Activated T-helper 1 cell treated with anti-CD3 and anti-CD28 coated beads, Interleukin-12 subunit alpha, Interleukin-12 subunit beta, Interleukin-2, Interleukin-4 antibody, amounts not matched to agents 30 ng/mL and 10 ng/mL and 1 ng/mL, durations not matched to agents 14 hours and 24 hours and 36 hours (primary cell): ENCODE measurements at regions of chr1 and their contacts with region 1.

Region 1: DNA sequence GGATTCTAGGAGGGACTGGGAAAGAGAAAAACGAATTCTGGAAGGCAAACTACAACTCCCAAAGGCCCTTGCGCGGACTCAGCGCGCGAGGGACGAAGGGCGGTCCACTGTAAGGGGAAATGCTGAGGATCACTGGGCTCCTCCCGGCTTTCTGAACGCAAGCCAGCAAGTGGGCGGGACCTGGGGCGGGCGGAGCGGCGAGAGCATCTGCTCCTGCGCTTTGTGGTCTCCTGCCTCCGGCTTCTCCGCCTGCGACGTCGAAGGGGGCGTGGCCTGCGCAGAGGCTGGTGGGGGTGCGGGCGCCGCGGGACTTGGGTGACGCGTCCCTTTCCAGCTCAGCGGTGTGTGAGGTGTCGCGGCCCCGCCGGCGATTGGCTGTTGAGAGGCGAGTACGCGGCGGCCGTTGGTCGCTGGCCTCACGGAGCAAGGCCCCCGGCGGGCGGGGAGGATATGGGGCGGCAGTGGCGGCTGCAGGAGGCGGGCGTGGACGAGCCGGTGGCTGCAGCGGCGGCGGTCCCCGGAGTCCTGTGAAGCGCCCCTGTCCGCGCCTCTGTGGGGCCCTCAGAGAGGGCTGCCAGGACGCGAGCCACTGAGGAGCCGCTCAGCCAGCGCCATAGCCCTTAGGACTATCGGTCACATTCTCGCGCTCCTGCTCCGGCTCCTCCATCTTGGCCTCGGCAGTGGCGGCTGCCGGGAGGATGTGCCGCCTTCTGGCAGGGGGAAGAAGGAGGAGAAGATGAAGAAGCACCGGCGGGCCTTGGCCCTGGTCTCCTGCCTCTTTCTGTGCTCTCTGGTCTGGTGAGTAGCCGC is at the start of gene SUCO:
- DNase-seq: peak; percentile 100
- H3K4me3 Mint-ChIP-seq: peak within 1 kb of the TSS; percentile 98
- H3K27ac Mint-ChIP-seq: peak within 1 kb of the TSS; percentile 99
- H3K4me1 Mint-ChIP-seq: peaks cover 48% of the 10 kb centered on the region
- H3K27me3 Mint-ChIP-seq: peaks cover 7% of the 10 kb centered on the region
- total RNA-seq, gene SUCO: 39.3 and 40.4 TPM in 2 replicates

Region 2: DNA sequence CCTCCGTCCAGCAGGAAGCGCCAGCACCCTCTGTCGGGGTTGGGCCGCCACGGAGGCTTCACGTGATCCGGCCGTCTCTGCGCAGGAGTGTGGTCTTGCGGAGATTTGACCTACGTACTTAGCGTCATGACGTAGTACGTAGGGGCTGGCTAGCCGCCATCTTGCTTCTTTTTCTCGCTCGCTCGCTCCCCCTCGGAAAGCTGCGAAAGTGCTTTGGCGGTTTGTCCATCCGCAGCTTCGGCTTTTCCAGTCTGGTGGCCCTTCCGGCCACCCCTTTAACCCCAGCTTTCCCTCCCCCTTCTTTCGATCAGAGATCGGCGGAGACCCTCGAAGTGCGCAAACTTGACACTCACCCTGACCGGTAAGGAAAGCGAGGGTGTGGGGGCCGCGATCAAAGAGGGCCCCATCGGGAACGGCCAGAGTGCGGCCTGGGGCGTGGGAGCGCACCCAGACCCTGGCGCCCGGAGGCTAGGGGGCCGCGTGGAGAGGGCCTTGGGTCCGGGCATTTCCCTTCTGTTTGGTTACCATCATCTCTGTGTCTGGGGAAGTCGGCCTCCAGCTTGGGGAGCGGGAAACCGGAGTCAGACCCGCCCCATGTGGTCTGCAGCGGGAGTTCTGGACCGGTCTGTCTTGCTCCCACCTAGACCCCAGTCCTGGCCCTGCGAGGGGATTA is 1047.4 kb before region 1 on chr1 and contains the start of gene PRRC2C:
- intact Hi-C with region 1: loop called (anchors 1 kb)
- DNase-seq: peak; percentile 91
- H3K4me3 Mint-ChIP-seq: peak within 1 kb of the TSS; percentile 98
- H3K27ac Mint-ChIP-seq: peak within 1 kb of the TSS; percentile 97
- H3K4me1 Mint-ChIP-seq: peaks cover 51% of the 10 kb centered on the region
- H3K27me3 Mint-ChIP-seq: peaks cover 1% of the 10 kb centered on the region
- total RNA-seq, gene PRRC2C: 291 and 295 TPM in 2 replicates

Region 3: DNA sequence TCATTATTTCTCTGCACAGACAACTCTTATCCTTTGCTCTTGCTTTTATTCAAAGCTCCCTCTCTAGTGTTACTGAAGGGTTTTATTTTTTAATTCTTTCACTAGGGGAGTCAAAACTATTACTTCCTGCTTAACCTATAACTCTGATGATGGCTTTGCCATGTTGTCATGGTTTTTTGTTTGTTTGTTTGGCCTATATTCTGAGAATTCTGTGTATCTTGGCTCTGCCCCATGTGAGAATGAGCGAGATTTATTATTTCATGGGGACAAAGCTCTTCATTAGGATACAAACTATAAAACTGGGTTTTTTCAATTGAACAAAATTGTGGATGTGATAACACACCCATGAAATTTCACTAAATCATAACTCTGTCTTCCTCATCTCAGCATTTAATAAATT is 303.0 kb before region 1 on chr1:
- intact Hi-C with region 1: no loop called
- DNase-seq: no peak
- H3K4me3 Mint-ChIP-seq: no peak overlapping the region
- H3K27ac Mint-ChIP-seq: no peak overlapping the region
- H3K4me1 Mint-ChIP-seq: peaks cover 7% of the 10 kb centered on the region
- H3K27me3 Mint-ChIP-seq: no peaks in the 10 kb centered on the region

Region 4: GRCh38 chr1:172269644-172270043 is 263.3 kb before region 1 on chr1:
- intact Hi-C with region 1: loop called (anchors 5 kb)
- DNase-seq: no peak
- H3K4me3 Mint-ChIP-seq: peak overlapping the region; percentile 43
- H3K27ac Mint-ChIP-seq: peak overlapping the region; percentile 82
- H3K4me1 Mint-ChIP-seq: peaks cover 64% of the 10 kb centered on the region
- H3K27me3 Mint-ChIP-seq: no peaks in the 10 kb centered on the region

Region 5: GRCh38 chr1:172662464-172663109 is 129.7 kb after region 1 on chr1:
- intact Hi-C with region 1: loop called (anchors 1 kb)
- DNase-seq: peak; percentile 79
- H3K4me3 Mint-ChIP-seq: peak overlapping the region; percentile 96
- H3K27ac Mint-ChIP-seq: peak overlapping the region; percentile 89
- H3K4me1 Mint-ChIP-seq: peaks cover 81% of the 10 kb centered on the region
- H3K27me3 Mint-ChIP-seq: no peaks in the 10 kb centered on the region

Region 6: GRCh38 chr1:172818841-172819527 is 286.1 kb after region 1 on chr1:
- intact Hi-C with region 1: loop called (anchors 1 kb)
- DNase-seq: peak; percentile 37
- H3K4me3 Mint-ChIP-seq: peak overlapping the region; percentile 59
- H3K27ac Mint-ChIP-seq: peak overlapping the region; percentile 78
- H3K4me1 Mint-ChIP-seq: peaks cover 47% of the 10 kb centered on the region
- H3K27me3 Mint-ChIP-seq: peaks cover 5% of the 10 kb centered on the region

Region 7: GRCh38 chr1:172867216-172867818 is 334.4 kb after region 1 on chr1:
- intact Hi-C with region 1: no loop called
- DNase-seq: no peak
- H3K4me3 Mint-ChIP-seq: no peak overlapping the region
- H3K27ac Mint-ChIP-seq: peak overlapping the region; percentile 10
- H3K4me1 Mint-ChIP-seq: peaks cover 21% of the 10 kb centered on the region
- H3K27me3 Mint-ChIP-seq: peaks cover 27% of the 10 kb centered on the region

Region 8: GRCh38 chr1:173867753-173868265 is 1334.9 kb after region 1 on chr1 and contains the start of gene GAS5:
- intact Hi-C with region 1: loop called (anchors 1 kb)
- DNase-seq: peak; percentile 99
- H3K4me3 Mint-ChIP-seq: peak within 1 kb of the TSS; percentile 98
- H3K27ac Mint-ChIP-seq: peak within 1 kb of the TSS; percentile 98
- H3K4me1 Mint-ChIP-seq: peaks cover 66% of the 10 kb centered on the region
- H3K27me3 Mint-ChIP-seq: no peaks in the 10 kb centered on the region
- total RNA-seq, gene GAS5: 653 and 688 TPM in 2 replicates